PC-9 (cell line): ENCODE measurements at regions of chr12 and their contacts with region 1.

Region 1: GRCh38 chr12:109110988-109111495 is 5.3 kb upstream of the ACACB start:
- DNase-seq: peak in 1 of 2 experiments; percentile 61
- H3K4me3 ChIP-seq: no peak overlapping the region
- H3K27ac ChIP-seq: no peak overlapping the region
- H3K4me1 ChIP-seq: no peaks in the 10 kb centered on the region
- H3K27me3 ChIP-seq: no peaks in the 10 kb centered on the region
- CTCF ChIP-seq: no peak

Region 2: DNA sequence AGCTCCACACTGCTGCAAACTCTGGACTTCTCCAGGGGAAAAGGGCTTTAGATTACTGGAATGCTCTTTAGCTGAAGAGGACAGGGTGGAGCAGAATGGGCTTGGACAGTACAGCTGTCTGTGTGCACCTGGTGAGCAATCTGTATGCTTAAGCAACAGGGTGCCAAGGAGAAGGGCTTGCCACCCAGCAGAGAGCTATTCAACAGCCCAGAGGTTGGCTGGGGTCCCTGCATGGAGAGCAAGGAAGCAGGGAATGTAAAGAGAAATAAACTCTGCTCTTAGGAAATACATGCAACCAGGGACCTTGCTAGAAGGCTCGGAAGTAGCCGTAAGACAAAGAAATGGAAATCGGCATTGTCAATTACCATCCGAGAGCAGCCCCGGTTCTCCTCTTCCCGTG is 326.8 kb before region 1 on chr12:
- CTCF ChIA-PET with region 1: interaction called, 14 read pairs
- POLR2A ChIA-PET with region 1: no interaction called
- intact Hi-C with region 1: no loop called
- DNase-seq: no peak
- H3K4me3 ChIP-seq: no peak overlapping the region
- H3K27ac ChIP-seq: no peak overlapping the region
- H3K4me1 ChIP-seq: no peaks in the 10 kb centered on the region
- H3K27me3 ChIP-seq: no peaks in the 10 kb centered on the region
- CTCF ChIP-seq: no peak

Region 3: DNA sequence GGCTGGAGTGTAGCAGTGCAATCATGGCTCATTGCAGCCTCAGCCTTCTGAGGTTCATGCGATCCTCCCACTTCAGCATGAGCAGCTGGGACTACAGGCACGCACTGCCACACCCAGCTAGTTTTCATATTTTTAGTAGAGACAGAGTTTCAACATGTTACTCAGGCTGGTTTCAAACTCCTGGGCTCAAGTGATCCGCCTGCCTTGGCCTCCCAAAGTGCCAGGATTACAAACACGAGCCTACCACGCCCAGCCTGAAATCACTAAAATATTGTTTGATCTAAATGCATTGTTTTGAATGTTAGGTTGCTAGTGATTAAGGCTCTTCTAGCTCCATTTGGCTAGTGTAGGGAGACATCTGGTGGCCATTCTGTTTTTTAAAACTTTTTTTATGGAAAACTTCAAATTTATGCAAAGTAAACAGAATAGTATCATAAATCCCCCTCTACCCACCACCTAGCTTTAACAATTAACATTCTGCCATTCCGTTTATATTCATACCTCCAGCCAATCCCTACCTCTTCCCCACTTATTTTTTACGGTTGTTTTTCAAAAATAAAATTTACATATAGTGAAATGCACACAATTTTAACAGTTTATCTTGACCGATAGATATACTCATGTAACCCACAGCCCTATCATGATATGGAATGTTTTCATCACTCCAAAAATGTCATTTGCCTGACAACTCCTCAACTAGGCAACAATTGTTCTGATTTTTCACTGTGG is 274.5 kb after region 1 on chr12:
- CTCF ChIA-PET with region 1: no interaction called
- POLR2A ChIA-PET with region 1: no interaction called
- intact Hi-C with region 1: loop called (anchors 2 kb)
- DNase-seq: peak; percentile 6 to 52
- H3K4me3 ChIP-seq: no peak overlapping the region
- H3K27ac ChIP-seq: no peak overlapping the region
- H3K4me1 ChIP-seq: no peaks in the 10 kb centered on the region
- H3K27me3 ChIP-seq: peaks cover 9% of the 10 kb centered on the region
- CTCF ChIP-seq: peak; percentile 80